RWPE1 (cell line): ENCODE measurements at regions of chr15 and their contacts with region 1.

Region 1: GRCh38 chr15:51776952-51777574 is 25.7 kb downstream of the TMOD2 start:
- DNase-seq: peak; percentile 82
- H3K27ac ChIP-seq: no peak overlapping the region
- CTCF ChIP-seq: peak; percentile 94

Region 2: DNA sequence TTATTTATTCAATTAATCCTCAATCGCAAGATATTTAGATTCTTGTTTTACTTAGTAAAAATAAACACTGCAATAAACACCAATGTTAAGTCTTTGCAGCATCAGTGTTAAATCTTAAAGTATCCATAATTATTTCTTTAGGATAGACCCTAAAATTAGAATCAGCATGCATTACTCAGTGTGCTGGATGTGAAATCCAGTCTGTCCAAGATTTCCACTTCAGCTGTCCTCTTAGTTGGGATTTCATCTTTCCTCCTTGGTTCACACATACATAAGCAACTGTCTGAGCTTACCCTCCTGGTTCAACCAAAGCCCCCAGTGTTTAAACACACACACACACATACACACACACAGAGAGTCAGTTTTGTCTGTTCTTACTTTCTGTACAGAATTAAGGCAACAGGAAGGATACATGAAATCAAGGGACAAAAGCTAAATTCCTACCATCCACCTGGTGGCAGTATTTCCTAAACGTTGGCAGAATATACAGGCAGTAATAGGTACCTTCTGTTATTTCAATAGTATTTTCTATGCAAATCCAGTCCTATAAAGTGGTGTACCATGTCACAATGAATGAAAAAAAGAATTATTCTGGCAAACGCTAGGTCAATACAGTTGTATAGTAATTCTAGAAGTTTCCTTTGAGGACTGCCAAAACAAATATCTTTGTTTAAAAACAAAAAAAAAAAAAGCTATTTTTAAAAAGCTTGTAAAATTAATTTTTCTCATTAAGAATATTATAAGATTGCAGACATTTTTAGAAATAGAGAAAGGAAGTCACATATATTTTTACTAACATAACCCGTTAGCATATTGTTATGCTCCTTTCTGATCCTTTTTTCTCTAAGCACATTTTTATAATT is 127.2 kb before region 1 on chr15:
- CTCF ChIA-PET with region 1: interaction called, 87 read pairs
- POLR2A ChIA-PET with region 1: no interaction called
- DNase-seq: peak; percentile 72
- H3K27ac ChIP-seq: no peak overlapping the region
- CTCF ChIP-seq: peak; percentile 85

Region 3: DNA sequence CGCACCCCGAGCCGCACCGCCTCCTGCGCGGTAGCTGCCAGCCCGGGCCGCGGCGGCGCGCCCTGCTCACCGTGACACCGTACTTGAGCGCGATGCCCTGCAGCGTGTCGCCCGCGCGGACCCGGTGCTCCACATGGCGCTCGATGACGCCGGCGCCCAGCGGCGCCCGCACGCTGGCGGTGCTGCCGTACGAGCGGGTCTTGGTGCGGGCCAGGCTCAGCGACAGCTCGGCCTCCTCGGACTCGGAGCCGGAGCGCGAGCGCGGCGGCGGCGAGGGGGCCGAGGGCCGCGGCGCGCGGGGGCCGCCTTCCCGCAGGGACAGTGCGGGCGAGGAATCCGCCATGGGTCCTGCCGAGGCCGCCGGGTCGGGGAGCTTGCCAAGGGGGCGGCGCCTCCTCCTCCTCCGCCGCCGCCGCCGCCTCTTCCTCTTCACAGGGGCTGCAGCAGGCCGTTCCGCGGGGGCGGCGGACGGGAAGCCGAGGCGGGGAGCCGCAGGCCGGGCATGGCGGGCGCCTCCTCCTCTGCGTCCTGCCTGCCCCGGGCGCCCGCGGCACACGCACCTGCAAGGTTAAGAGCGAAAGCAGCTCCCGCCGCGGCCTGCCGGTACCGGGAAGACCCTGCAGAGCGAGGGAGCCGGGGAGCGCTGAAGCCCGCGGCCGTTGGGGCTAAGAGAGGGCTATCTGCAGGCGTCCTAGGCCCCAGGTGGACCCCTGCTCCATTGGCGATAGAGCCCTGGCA is 39.6 kb before region 1 on chr15 and contains the start of gene LYSMD2:
- CTCF ChIA-PET with region 1: interaction called, 13 read pairs
- POLR2A ChIA-PET with region 1: no interaction called
- DNase-seq: peak; percentile 44
- H3K27ac ChIP-seq: peak within 1 kb of the TSS; percentile 63
- CTCF ChIP-seq: no peak